CD14-positive monocyte (primary cell): ENCODE measurements at regions of chr1 and their contacts with region 1.

Region 1: GRCh38 chr1:161096530-161097313 is 1.4 kb upstream of the KLHDC9 start:
- DNase-seq: peak; percentile 53 to 90 (median 76)
- H3K4me3 ChIP-seq: peak overlapping the region in 1 of 3 experiments; percentile 76
- H3K4me3 Mint-ChIP-seq: peak overlapping the region in 1 of 2 donors; percentile 21
- H3K27ac ChIP-seq: no peak overlapping the region
- H3K27ac Mint-ChIP-seq: peak overlapping the region; percentile 65 to 90 (median 81)
- H3K4me1 ChIP-seq: peaks cover 34 to 37% of the 10 kb centered on the region in 2 donors
- H3K4me1 Mint-ChIP-seq: peaks cover 55% of the 10 kb centered on the region
- H3K27me3 ChIP-seq: peaks cover 0 to 7% of the 10 kb centered on the region in 2 donors
- H3K27me3 Mint-ChIP-seq: peaks cover 6 to 22% (median 10%) of the 10 kb centered on the region in 3 donors
- CTCF ChIP-seq: no peak

Region 2: GRCh38 chr1:160981584-160982411 is 114.9 kb before region 1 on chr1:
- intact Hi-C with region 1: no loop called
- DNase-seq: peak; percentile 18 to 26 (median 26)
- H3K4me3 ChIP-seq: peak overlapping the region in 2 of 3 experiments; percentile 21 to 67
- H3K4me3 Mint-ChIP-seq: peak overlapping the region; percentile 76 to 91
- H3K27ac ChIP-seq: no peak overlapping the region
- H3K27ac Mint-ChIP-seq: no peak overlapping the region
- H3K4me1 ChIP-seq: peaks cover 12 to 13% of the 10 kb centered on the region in 2 donors
- H3K4me1 Mint-ChIP-seq: peaks cover 13% of the 10 kb centered on the region
- H3K27me3 ChIP-seq: peaks cover 9 to 29% of the 10 kb centered on the region in 2 donors
- H3K27me3 Mint-ChIP-seq: peaks cover 24 to 35% (median 28%) of the 10 kb centered on the region in 3 donors
- CTCF ChIP-seq: no peak

Region 3: GRCh38 chr1:161045750-161046571 is 50.8 kb before region 1 on chr1 and contains the start of gene USF1:
- intact Hi-C with region 1: no loop called
- DNase-seq: peak; percentile 95 to 96 (median 96)
- H3K4me3 ChIP-seq: peak within 1 kb of the TSS; percentile 81 to 96 (median 95)
- H3K4me3 Mint-ChIP-seq: peak within 1 kb of the TSS; percentile 99
- H3K27ac ChIP-seq: peak within 1 kb of the TSS; percentile 88 to 99
- H3K27ac Mint-ChIP-seq: peak within 1 kb of the TSS; percentile 99 to 100 (median 100)
- H3K4me1 ChIP-seq: peaks cover 50 to 63% of the 10 kb centered on the region in 2 donors
- H3K4me1 Mint-ChIP-seq: peaks cover 71% of the 10 kb centered on the region
- H3K27me3 ChIP-seq: no peaks in the 10 kb centered on the region
- H3K27me3 Mint-ChIP-seq: no peaks in the 10 kb centered on the region
- CTCF ChIP-seq: no peak
- polyA plus RNA-seq, gene USF1: 6.3 to 335 (median 25.5) TPM

Region 4: DNA sequence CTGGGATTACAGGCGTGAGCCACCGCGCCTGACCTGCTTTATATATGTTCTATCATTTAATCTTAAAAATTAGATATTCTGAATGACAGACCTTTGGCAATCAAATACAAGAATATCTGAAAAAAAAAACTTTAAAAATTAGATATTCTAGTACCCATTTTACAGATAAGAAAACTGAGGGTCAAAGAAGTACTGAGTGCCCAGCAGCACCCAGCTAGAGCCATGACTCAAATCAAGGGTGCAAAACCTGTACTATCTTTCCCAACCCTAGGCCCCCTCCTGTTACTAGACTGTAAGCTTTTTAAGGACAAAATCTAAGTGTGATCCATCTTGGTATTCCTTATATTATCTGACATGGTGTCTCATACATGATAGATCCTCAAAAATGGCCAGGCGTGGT is 35.3 kb before region 1 on chr1:
- intact Hi-C with region 1: no loop called
- DNase-seq: no peak
- H3K4me3 ChIP-seq: no peak overlapping the region
- H3K4me3 Mint-ChIP-seq: no peak overlapping the region
- H3K27ac ChIP-seq: peak overlapping the region in 1 of 2 donors; percentile 14
- H3K27ac Mint-ChIP-seq: peak overlapping the region in 5 of 7 donors; percentile 5 to 85 (median 53)
- H3K4me1 ChIP-seq: peaks cover 12 to 23% of the 10 kb centered on the region in 2 donors
- H3K4me1 Mint-ChIP-seq: peaks cover 39% of the 10 kb centered on the region
- H3K27me3 ChIP-seq: no peaks in the 10 kb centered on the region
- H3K27me3 Mint-ChIP-seq: peaks cover 0 to 2% (median 0%) of the 10 kb centered on the region in 3 donors
- CTCF ChIP-seq: no peak

Region 5: GRCh38 chr1:161082991-161083742 is 13.6 kb before region 1 on chr1:
- intact Hi-C with region 1: loop called in 1 of 2 experiments (anchors 2 kb)
- DNase-seq: peak; percentile 98 to 99 (median 99)
- H3K4me3 ChIP-seq: peak overlapping the region in 1 of 3 experiments; percentile 7
- H3K4me3 Mint-ChIP-seq: peak overlapping the region; percentile 35 to 41
- H3K27ac ChIP-seq: peak overlapping the region; percentile 62 to 89
- H3K27ac Mint-ChIP-seq: peak overlapping the region; percentile 90 to 98 (median 96)
- H3K4me1 ChIP-seq: peaks cover 47 to 60% of the 10 kb centered on the region in 2 donors
- H3K4me1 Mint-ChIP-seq: peaks cover 69% of the 10 kb centered on the region
- H3K27me3 ChIP-seq: no peaks in the 10 kb centered on the region
- H3K27me3 Mint-ChIP-seq: peaks cover 0 to 3% (median 1%) of the 10 kb centered on the region in 3 donors
- CTCF ChIP-seq: no peak

Region 6: GRCh38 chr1:161139765-161140164 is 43.0 kb after region 1 on chr1:
- intact Hi-C with region 1: loop called in 1 of 2 experiments (anchors 2 kb)
- DNase-seq: peak; percentile 47 to 60 (median 51)
- H3K4me3 ChIP-seq: no peak overlapping the region
- H3K4me3 Mint-ChIP-seq: no peak overlapping the region
- H3K27ac ChIP-seq: peak overlapping the region in 1 of 2 donors; percentile 88
- H3K27ac Mint-ChIP-seq: peak overlapping the region in 5 of 7 donors; percentile 35 to 97 (median 86)
- H3K4me1 ChIP-seq: peaks cover 40 to 42% of the 10 kb centered on the region in 2 donors
- H3K4me1 Mint-ChIP-seq: peaks cover 48% of the 10 kb centered on the region
- H3K27me3 ChIP-seq: no peaks in the 10 kb centered on the region
- H3K27me3 Mint-ChIP-seq: no peaks in the 10 kb centered on the region
- CTCF ChIP-seq: peak; percentile 73